Prostate gland (tissue), 2 donors: ENCODE measurements at regions of chr13 and their contacts with region 1.

Region 1: GRCh38 chr13:76667551-76667950 is 218.7 kb downstream of the KCTD12 start:
- DNase-seq: no peak
- H3K4me3 ChIP-seq: no peak overlapping the region
- H3K27ac ChIP-seq: no peak overlapping the region
- H3K4me1 ChIP-seq: no peaks in the 10 kb centered on the region
- H3K27me3 ChIP-seq: no peaks in the 10 kb centered on the region
- CTCF ChIP-seq: peak in 2 of 4 experiments; percentile 39 to 41
- POLR2A ChIP-seq: no peak

Region 2: DNA sequence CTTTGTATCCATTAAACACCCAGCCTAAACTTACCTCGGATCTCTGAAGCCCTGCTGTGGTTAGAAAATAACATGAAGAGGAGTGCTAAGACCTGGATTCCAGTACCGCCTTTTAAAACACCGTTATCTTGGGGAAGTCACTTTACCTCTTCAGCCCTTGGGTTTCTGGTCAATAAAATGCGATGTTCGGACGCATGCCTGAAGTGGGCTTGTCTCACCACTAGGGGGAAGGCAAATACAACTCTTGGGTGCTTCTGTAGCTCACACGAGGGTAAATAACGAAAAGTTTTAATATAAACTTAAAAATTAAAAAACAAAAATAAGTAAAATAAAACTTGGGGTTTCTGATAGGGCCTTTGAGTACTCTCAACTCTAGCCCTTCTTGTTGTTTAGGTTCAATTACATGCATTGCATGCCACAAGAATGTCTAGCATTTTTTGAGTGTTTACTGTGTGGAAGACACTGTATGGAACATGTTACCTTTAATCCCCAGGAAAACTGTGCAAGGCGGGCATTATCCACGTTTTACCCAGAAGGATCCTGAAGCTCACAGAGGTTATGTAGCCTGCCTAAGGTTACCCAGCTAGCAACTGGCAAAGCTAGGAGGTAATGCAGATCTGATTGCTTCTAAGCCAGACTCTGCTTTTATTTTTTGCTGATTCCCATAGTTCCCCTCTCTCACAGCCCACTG is 791.0 kb before region 1 on chr13:
- intact Hi-C with region 1: no loop called
- DNase-seq: peak; percentile 42
- H3K4me3 ChIP-seq: no peak overlapping the region
- H3K27ac ChIP-seq: no peak overlapping the region
- H3K4me1 ChIP-seq: no peaks in the 10 kb centered on the region
- H3K27me3 ChIP-seq: no peaks in the 10 kb centered on the region
- CTCF ChIP-seq: peak; percentile 73 to 82 (median 79)
- POLR2A ChIP-seq: no peak

Region 3: DNA sequence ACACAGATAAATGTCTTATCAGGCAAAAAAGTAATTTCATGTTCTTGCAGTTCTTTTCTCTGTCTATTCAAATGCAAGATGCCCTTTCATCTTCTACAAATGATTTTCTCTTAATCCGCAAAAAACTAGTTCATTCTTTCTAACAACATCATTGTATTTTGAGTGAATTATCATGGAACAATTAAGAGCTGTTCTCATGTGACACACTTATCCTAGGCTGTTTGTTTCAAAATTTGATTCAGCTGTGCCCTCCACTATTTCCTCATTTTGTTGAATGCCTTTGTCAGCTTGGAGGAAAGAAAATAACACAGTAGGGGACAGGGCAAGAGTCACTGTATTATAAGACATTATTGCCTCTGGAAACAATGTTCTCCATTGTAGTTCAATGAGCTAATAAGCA is 178.3 kb before region 1 on chr13:
- intact Hi-C with region 1: no loop called
- DNase-seq: no peak
- H3K4me3 ChIP-seq: no peak overlapping the region
- H3K27ac ChIP-seq: no peak overlapping the region
- H3K4me1 ChIP-seq: no peaks in the 10 kb centered on the region
- H3K27me3 ChIP-seq: no peaks in the 10 kb centered on the region
- CTCF ChIP-seq: no peak
- POLR2A ChIP-seq: no peak

Region 4: GRCh38 chr13:76886292-76887075 is 218.9 kb after region 1 on chr13 and contains the start of gene KCTD12:
- intact Hi-C with region 1: loop called (anchors 5 kb)
- DNase-seq: peak; percentile 63
- H3K4me3 ChIP-seq: peak within 1 kb of the TSS; percentile 53 to 54
- H3K27ac ChIP-seq: peak within 1 kb of the TSS; percentile 69 to 74
- H3K4me1 ChIP-seq: no peaks in the 10 kb centered on the region
- H3K27me3 ChIP-seq: peaks cover 3% of the 10 kb centered on the region
- CTCF ChIP-seq: peak in 2 of 4 experiments; percentile 26 to 38
- POLR2A ChIP-seq: peak; percentile 19
- total RNA-seq, gene KCTD12: 21.5 to 111 TPM

Region 5: GRCh38 chr13:76903544-76904162 is 236.1 kb after region 1 on chr13:
- intact Hi-C with region 1: loop called (anchors 5 kb)
- DNase-seq: peak; percentile 52
- H3K4me3 ChIP-seq: no peak overlapping the region
- H3K27ac ChIP-seq: no peak overlapping the region
- H3K4me1 ChIP-seq: no peaks in the 10 kb centered on the region
- H3K27me3 ChIP-seq: no peaks in the 10 kb centered on the region
- CTCF ChIP-seq: peak; percentile 78 to 89 (median 88)
- POLR2A ChIP-seq: no peak